ENCODE measurements at regions of chr17 and their contacts with region 1.

Region 1: DNA sequence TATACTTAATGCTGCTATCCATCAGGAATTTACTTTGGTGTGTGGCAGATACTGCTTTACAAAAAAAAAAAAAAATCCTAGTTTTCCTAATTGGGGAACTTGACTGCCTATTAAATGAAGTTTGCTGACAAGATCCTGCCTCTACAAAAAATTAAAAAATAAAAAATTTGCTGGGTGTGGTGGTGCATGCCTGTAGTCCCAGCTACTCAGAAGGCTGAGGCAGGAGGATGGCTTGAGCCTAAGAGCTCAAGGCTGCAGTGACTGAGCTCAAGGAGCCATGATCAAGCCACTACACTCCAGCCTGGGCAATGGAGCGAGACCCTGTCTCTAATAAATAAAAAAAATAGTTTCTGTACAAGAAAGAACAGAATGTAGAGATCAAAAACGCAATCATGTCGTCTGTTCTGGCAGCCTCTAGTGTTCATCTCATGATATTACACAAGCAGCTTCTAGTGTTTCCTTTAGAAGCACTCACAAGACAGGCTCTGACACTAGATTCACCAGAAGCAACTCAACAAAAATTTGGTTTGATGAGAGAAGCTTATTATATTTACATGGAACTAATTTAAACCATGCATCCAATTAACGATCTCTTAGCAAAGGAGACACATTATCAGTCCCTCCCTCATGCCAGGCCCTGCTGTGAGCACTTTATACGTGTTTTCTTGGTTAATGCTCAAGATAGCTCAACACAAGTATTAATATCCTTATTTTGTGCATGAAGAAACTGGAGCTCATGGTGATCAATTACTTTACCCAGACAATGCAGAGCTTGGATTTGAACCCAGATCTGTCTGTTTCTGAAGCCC is 6.8 kb upstream of the KRTAP17-1 start:
- DNase-seq: peak; percentile 61
- H3K4me3 ChIP-seq: no peak overlapping the region
- H3K27ac ChIP-seq: peak overlapping the region; percentile 39
- H3K4me1 ChIP-seq: peaks cover 3% of the 10 kb centered on the region
- H3K27me3 ChIP-seq: no peaks in the 10 kb centered on the region
- CTCF ChIP-seq: peak; percentile 95 to 98

Region 2: DNA sequence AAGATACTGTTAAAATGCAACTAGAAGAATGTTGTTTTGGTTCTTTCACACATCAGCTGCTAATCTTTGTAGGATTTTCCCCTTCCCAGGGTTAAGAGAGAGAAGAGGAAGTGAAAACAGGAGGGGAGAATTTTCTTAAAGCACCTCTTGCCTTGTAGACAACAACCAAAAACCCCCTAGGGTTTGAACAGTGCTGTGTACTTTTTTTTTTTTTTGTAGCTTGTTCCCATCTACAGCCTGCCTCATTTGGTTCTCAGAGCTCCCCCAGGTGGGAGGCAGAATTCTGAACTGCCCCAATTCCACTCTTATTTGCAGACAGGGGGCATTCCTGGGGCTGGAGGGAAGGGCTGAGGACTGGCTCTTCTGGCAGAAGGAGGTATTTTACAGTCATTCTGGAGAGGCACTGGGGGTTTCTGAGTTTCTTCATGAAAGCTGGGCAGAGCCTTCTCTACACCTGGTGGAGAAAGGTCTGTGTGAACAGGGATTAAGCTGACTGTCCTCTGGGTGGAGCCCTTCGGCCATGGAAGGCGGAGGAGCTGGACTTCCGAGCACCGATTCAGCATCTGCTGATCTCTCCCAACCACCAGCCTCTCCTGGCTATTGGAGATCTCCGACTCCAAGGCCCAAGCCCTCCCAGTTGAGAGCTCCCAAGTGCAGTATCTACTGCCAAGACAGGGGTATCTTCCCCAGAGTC is 706.9 kb before region 1 on chr17:
- CTCF ChIA-PET with region 1: no interaction called
- dilution Hi-C with region 1: no loop called
- in situ Hi-C with region 1: no loop called
- intact Hi-C with region 1: loop called (anchors 5 kb)
- DNase-seq: peak; percentile 67
- H3K4me3 ChIP-seq: no peak overlapping the region
- H3K27ac ChIP-seq: no peak overlapping the region
- H3K4me1 ChIP-seq: no peaks in the 10 kb centered on the region
- H3K27me3 ChIP-seq: no peaks in the 10 kb centered on the region
- CTCF ChIP-seq: peak; percentile 59 to 68

Region 3: DNA sequence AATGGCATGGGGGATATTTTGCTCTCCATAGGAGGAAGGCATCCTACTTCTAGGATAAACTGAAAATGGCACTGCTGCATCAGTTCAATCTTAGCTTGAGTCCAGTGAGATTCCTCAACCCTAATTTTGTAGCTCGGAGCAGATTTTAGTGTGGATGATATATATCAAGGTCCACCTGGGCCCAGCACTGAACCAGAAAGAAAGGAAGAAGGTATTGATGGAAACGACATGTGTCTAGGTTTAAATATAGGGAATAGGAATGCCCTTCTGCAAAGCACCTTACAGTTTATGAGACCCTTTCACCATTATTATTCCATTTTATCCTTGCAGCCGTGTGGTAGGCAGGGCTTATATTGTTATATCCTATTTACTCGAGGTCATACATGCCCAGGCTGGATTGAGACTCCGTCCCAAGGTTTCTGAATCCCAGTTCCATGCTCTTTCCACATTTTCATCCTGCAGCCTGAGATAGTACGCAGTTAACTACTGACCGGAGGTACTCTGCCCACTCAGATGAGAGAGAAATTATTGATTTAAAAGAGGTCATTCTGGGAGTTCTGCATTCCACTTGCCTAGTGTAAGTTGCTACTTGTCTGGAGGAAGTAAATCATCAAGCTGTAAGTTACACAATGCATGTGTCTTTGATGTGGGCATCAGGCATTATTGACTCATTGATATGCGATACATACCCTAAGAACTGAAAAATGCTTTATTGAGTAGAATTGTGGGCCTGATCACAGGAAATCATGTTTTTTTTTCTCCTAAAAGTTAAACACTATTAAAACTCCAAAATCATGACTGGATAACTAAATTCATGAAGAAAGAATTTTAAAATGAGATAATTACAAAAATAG is 365.7 kb before region 1 on chr17:
- CTCF ChIA-PET with region 1: no interaction called
- dilution Hi-C with region 1: no loop called
- in situ Hi-C with region 1: no loop called
- intact Hi-C with region 1: loop called (anchors 2 kb)
- DNase-seq: peak; percentile 99
- H3K4me3 ChIP-seq: no peak overlapping the region
- H3K27ac ChIP-seq: peak overlapping the region; percentile 99
- H3K4me1 ChIP-seq: peaks cover 75% of the 10 kb centered on the region
- H3K27me3 ChIP-seq: no peaks in the 10 kb centered on the region
- CTCF ChIP-seq: no peak

Region 4: DNA sequence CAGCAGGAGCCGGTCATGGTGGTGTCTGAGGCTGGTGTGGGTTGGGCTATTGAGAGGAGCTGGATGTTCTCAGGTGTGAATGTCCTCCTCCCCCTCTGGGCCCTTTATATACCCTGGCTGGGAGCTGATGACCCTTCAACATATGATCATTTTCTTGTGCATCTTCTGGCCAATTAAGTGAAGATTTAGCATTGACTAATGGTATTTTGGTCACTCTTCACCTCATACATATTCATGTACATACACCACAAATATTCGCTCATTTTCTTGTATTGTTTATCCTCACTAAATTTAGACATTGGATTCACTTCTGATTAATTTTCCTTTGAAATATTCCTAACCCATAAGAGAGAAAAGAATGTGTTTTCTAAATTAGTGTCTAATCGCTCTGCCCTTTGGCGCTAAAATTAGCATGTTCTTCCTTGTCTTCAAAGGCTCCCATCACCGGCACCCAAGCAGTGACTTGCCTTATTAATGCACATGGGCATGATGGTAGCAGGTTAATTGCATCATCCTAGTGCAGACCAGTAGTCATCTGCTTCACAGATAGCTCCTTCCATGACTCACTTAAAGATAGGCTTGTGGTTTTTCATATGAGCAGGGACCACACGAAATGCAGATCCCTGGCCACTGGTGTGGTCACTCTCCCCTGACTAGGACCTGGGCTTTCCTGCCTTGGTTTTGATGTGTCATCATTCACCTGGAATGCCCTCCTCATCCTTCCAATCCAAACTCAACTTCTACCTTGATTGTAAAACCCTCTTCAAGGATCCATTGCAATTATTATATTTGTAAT is 256.3 kb before region 1 on chr17 and contains the start of gene KRTAP2-4:
- CTCF ChIA-PET with region 1: no interaction called
- dilution Hi-C with region 1: no loop called
- in situ Hi-C with region 1: no loop called
- intact Hi-C with region 1: loop called (anchors 2 kb)
- DNase-seq: peak; percentile 96
- H3K4me3 ChIP-seq: no peak within 1 kb of the TSS
- H3K27ac ChIP-seq: no peak within 1 kb of the TSS
- H3K4me1 ChIP-seq: peaks cover 31% of the 10 kb centered on the region
- H3K27me3 ChIP-seq: no peaks in the 10 kb centered on the region
- CTCF ChIP-seq: no peak
- total RNA-seq, gene KRTAP2-4: not detected

Region 5: DNA sequence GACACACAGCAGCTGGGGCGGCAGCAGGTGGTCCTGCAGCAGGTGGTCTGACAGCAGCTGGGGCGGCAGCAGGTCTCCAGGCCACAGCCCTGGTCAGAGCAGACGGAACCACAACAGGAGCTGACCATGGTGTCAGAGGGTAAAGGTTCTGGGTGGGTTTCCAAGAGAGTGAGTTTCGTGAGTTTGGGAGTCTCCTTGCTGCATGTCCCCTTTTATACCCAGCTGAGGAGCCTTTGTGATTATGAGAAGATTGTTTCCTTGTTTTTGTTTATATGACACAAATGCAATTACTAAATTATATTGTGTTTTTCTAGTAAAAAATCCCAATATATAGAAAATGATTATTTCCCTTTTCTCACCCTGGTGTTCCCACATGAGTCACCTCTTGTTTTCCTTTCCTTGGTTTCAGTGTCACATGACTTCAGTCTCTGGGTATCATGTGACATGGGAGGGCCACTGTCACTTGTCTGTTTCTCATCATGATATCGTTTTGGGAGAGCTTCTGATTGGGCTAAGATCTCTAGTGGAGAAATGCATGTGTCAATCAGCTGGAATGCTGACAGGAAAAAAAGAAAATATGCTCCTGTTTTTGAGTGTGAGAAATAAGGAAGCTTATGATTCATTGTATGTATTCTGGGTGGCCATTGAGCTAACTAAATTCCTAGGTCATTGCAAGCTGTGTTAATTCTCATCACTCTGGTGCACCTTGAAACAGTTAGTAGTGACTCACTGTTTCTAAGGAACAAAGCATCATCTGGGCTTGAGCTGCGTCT is 181.8 kb before region 1 on chr17 and contains the start of gene KRTAP4-6:
- CTCF ChIA-PET with region 1: no interaction called
- dilution Hi-C with region 1: no loop called
- in situ Hi-C with region 1: no loop called
- intact Hi-C with region 1: loop called (anchors 1 kb)
- DNase-seq: peak; percentile 93
- H3K4me3 ChIP-seq: no peak within 1 kb of the TSS
- H3K27ac ChIP-seq: peak within 1 kb of the TSS; percentile 60
- H3K4me1 ChIP-seq: peaks cover 10% of the 10 kb centered on the region
- H3K27me3 ChIP-seq: no peaks in the 10 kb centered on the region
- CTCF ChIP-seq: no peak
- total RNA-seq, gene KRTAP4-6: not detected

Region 6: GRCh38 chr17:41211845-41212466 is 110.3 kb before region 1 on chr17:
- CTCF ChIA-PET with region 1: no interaction called
- dilution Hi-C with region 1: loop called (anchors 5 kb)
- in situ Hi-C with region 1: no loop called
- intact Hi-C with region 1: no loop called
- DNase-seq: peak; percentile 71
- H3K4me3 ChIP-seq: no peak overlapping the region
- H3K27ac ChIP-seq: no peak overlapping the region
- H3K4me1 ChIP-seq: peaks cover 4% of the 10 kb centered on the region
- H3K27me3 ChIP-seq: peaks cover 2% of the 10 kb centered on the region
- CTCF ChIP-seq: no peak

Region 7: GRCh38 chr17:41403798-41404671 is 81.7 kb after region 1 on chr17:
- CTCF ChIA-PET with region 1: no interaction called
- dilution Hi-C with region 1: no loop called
- in situ Hi-C with region 1: no loop called
- intact Hi-C with region 1: loop called (anchors 5 kb)
- DNase-seq: peak; percentile 100
- H3K4me3 ChIP-seq: no peak overlapping the region
- H3K27ac ChIP-seq: peak overlapping the region; percentile 94
- H3K4me1 ChIP-seq: peaks cover 32% of the 10 kb centered on the region
- H3K27me3 ChIP-seq: no peaks in the 10 kb centered on the region
- CTCF ChIP-seq: no peak

Region 8: GRCh38 chr17:41464682-41465081 is 142.4 kb after region 1 on chr17:
- CTCF ChIA-PET with region 1: no interaction called
- dilution Hi-C with region 1: no loop called
- in situ Hi-C with region 1: no loop called
- intact Hi-C with region 1: no loop called
- DNase-seq: peak; percentile 96
- H3K4me3 ChIP-seq: no peak overlapping the region
- H3K27ac ChIP-seq: no peak overlapping the region
- H3K4me1 ChIP-seq: peaks cover 29% of the 10 kb centered on the region
- H3K27me3 ChIP-seq: no peaks in the 10 kb centered on the region
- CTCF ChIP-seq: no peak

Measured in mammary epithelial cell (primary cell).